ENCODE measurements at regions of chr1 and their contacts with region 1.

Region 1: DNA sequence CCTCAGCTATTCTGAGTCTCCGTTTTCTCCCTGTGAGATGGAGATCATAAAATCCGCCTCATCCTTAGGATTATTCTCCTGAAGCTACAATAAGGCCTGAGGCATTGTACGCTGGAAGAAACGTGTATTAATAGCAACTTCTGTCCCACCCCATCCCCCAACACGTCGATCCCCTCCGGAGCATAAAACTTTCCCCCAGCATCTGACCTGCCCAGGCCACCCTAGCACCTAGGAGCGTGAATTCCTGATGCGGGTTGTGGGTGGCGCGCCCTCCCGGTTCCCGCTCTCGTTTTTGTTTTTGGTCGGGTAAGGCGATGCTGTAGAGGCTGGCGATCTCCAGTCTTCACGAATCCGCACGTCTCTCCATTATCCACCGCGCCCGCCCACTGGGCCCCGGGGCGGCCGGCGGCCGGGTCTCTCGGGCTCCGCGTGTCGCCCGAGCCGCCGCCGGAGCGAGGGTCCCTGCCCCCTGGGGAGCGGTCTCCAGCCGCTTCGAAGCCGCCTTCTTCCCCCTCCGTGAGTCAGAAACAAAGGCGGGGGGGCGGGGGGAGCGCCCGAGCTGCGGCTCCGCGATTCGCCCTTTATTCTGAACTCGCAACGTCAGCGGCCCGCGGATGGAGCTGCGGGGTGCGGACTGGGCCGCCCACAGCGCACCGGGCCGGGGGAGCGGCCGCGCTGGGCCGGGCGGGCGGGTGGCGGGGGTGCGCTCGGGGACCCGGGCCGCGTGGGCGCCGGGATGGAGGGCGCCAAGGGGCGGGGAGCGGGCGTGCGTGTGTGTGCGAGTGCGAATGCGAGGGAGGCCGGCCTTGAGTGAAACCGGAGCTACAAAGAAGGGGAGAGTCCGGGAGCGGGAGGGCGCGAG is at the start of gene PLEKHO1:
- DNase-seq: peak; percentile 78
- ATAC-seq: peak; percentile 66
- H3K4me3 Mint-ChIP-seq: peak within 1 kb of the TSS; percentile 95
- H3K27ac Mint-ChIP-seq: peak within 1 kb of the TSS; percentile 96
- H3K4me1 Mint-ChIP-seq: peaks cover 68% of the 10 kb centered on the region
- H3K27me3 Mint-ChIP-seq: peaks cover 4% of the 10 kb centered on the region
- total RNA-seq, gene PLEKHO1: 140 to 143 TPM

Region 2: DNA sequence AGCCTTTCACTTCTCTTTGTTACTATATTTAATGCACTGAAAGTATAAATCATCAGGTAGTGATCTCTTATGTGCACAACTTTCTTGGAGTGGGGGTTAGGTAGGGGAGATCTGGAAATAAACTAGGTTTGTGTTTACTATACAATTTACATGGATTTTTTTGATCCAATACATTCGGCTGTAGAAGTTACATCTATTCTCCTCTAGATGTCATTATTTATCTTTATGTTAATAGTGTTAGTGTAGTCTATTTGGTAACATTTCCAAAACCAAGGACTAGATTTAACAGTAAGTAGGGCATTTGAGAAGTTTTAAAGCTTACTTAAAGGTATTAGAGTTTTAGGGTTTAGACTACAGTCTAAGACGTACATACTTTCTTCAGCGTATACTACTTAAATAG is 76.5 kb before region 1 on chr1:
- POLR2A ChIA-PET with region 1: interaction called, 13 read pairs
- DNase-seq: no peak
- ATAC-seq: peak; percentile 60
- H3K4me3 Mint-ChIP-seq: no peak overlapping the region
- H3K27ac Mint-ChIP-seq: no peak overlapping the region
- H3K4me1 Mint-ChIP-seq: peaks cover 38% of the 10 kb centered on the region
- H3K27me3 Mint-ChIP-seq: no peaks in the 10 kb centered on the region

Region 3: GRCh38 chr1:150092180-150092791 is 57.2 kb before region 1 on chr1:
- POLR2A ChIA-PET with region 1: interaction called, 13 read pairs
- DNase-seq: no peak
- ATAC-seq: peak; percentile 83
- H3K4me3 Mint-ChIP-seq: peak overlapping the region; percentile 65
- H3K27ac Mint-ChIP-seq: peak overlapping the region; percentile 93
- H3K4me1 Mint-ChIP-seq: peaks cover 37% of the 10 kb centered on the region
- H3K27me3 Mint-ChIP-seq: no peaks in the 10 kb centered on the region

Region 4: DNA sequence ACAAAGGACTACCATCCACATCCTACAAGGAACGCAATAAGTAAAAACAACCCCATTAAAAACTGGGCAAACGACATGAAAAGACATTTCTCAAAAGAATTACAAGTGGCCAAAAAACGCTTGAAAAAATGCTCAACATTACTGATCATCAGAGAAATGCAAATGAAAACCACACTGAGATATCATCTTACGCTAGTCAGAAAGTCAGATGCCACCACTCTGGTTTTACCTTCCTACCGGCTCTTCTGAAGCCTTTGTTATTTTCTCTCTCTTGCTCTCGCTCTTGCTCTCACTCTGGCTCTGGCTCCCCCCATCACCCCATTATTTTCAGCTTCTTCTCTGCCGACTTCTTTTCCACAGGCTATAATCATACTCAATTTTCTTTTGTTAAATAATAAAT is 43.2 kb before region 1 on chr1:
- POLR2A ChIA-PET with region 1: interaction called, 24 read pairs
- DNase-seq: no peak
- ATAC-seq: peak; percentile 77
- H3K4me3 Mint-ChIP-seq: peak overlapping the region; percentile 75
- H3K27ac Mint-ChIP-seq: peak overlapping the region; percentile 90
- H3K4me1 Mint-ChIP-seq: peaks cover 67% of the 10 kb centered on the region
- H3K27me3 Mint-ChIP-seq: no peaks in the 10 kb centered on the region

Region 5: DNA sequence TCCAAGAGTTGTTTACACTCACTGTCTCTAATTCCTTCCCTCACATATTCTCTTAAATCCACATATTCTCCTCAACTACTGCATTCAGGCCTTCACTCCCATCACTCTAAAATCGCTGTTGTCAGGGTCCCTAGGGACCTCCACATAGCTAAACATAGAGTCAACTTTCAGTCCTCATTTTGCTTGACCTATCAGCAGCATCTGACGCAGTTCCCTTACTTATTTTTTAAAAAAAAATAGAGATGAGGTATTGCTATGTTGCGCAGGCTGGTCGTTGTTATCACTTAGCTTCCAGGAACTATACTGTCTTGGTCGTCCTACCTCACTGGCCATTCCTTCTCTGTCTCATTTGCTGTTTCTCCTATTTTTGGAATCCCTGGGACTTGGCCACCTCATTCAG is 11.5 kb before region 1 on chr1:
- POLR2A ChIA-PET with region 1: no interaction called
- DNase-seq: no peak
- ATAC-seq: no peak
- H3K4me3 Mint-ChIP-seq: no peak overlapping the region
- H3K27ac Mint-ChIP-seq: no peak overlapping the region
- H3K4me1 Mint-ChIP-seq: peaks cover 4% of the 10 kb centered on the region
- H3K27me3 Mint-ChIP-seq: no peaks in the 10 kb centered on the region

Region 6: GRCh38 chr1:150162862-150163706 is 13.6 kb after region 1 on chr1:
- POLR2A ChIA-PET with region 1: interaction called, 54 read pairs
- DNase-seq: no peak
- ATAC-seq: peak; percentile 48
- H3K4me3 Mint-ChIP-seq: peak overlapping the region; percentile 49
- H3K27ac Mint-ChIP-seq: peak overlapping the region; percentile 53
- H3K4me1 Mint-ChIP-seq: peaks cover 64% of the 10 kb centered on the region
- H3K27me3 Mint-ChIP-seq: no peaks in the 10 kb centered on the region